ENCODE measurements at regions of chr1 and their contacts with region 1.

Region 1: GRCh38 chr1:17125756-17126237 is 6.5 kb upstream of the PADI2 start:
- DNase-seq: peak; percentile 84 to 87
- H3K4me3 ChIP-seq: no peak overlapping the region
- H3K27ac ChIP-seq: no peak overlapping the region
- H3K4me1 ChIP-seq: no peaks in the 10 kb centered on the region
- H3K27me3 ChIP-seq: no peaks in the 10 kb centered on the region
- CTCF ChIP-seq: peak; percentile 91 to 94 (median 92)
- POLR2A ChIP-seq: no peak

Region 2: GRCh38 chr1:17236779-17237560 is 111.2 kb after region 1 on chr1:
- intact Hi-C with region 1: loop called (anchors 2 kb)
- DNase-seq: peak; percentile 86 to 91
- H3K4me3 ChIP-seq: no peak overlapping the region
- H3K27ac ChIP-seq: no peak overlapping the region
- H3K4me1 ChIP-seq: peaks cover 0 to 7% of the 10 kb centered on the region in 2 donors
- H3K27me3 ChIP-seq: no peaks in the 10 kb centered on the region
- CTCF ChIP-seq: peak; percentile 67 to 93 (median 82)
- POLR2A ChIP-seq: no peak

Region 3: GRCh38 chr1:17861685-17862084 is 735.9 kb after region 1 on chr1:
- intact Hi-C with region 1: no loop called
- DNase-seq: no peak
- H3K4me3 ChIP-seq: no peak overlapping the region
- H3K27ac ChIP-seq: no peak overlapping the region
- H3K4me1 ChIP-seq: no peaks in the 10 kb centered on the region
- H3K27me3 ChIP-seq: no peaks in the 10 kb centered on the region
- CTCF ChIP-seq: no peak
- POLR2A ChIP-seq: no peak

Measured in thyroid gland (tissue), 4 donors.